ENCODE measurements at regions of chr22 and their contacts with region 1.

Region 1: GRCh38 chr22:28600546-28601143 is 79.0 kb downstream of the TTC28 start:
- DNase-seq: no peak
- ATAC-seq: peak; percentile 59
- H3K4me3 ChIP-seq: no peak overlapping the region
- H3K27ac ChIP-seq: no peak overlapping the region
- H3K4me1 ChIP-seq: no peaks in the 10 kb centered on the region
- H3K27me3 ChIP-seq: no peaks in the 10 kb centered on the region
- CTCF ChIP-seq: peak; percentile 23 to 63 (median 37); a peak in 4 of 6 replicates
- EP300 ChIP-seq: no peak
- POLR2A ChIP-seq: no peak
- RAD21 ChIP-seq: peak; percentile 87

Region 2: GRCh38 chr22:28570691-28571373 is 29.8 kb before region 1 on chr22:
- CTCF ChIA-PET with region 1: no interaction called
- POLR2A ChIA-PET with region 1: no interaction called
- RAD21 ChIA-PET with region 1: no interaction called
- SMC1A ChIA-PET with region 1: no interaction called
- in situ Hi-C with region 1: no loop called
- intact Hi-C with region 1: no loop called
- DNase-seq: no peak
- ATAC-seq: no peak
- H3K4me3 ChIP-seq: no peak overlapping the region
- H3K27ac ChIP-seq: no peak overlapping the region
- H3K4me1 ChIP-seq: no peaks in the 10 kb centered on the region
- H3K27me3 ChIP-seq: no peaks in the 10 kb centered on the region; a peak in 1 of 4 replicates
- CTCF ChIP-seq: no peak
- EP300 ChIP-seq: no peak
- POLR2A ChIP-seq: no peak
- RAD21 ChIP-seq: no peak

Region 3: DNA sequence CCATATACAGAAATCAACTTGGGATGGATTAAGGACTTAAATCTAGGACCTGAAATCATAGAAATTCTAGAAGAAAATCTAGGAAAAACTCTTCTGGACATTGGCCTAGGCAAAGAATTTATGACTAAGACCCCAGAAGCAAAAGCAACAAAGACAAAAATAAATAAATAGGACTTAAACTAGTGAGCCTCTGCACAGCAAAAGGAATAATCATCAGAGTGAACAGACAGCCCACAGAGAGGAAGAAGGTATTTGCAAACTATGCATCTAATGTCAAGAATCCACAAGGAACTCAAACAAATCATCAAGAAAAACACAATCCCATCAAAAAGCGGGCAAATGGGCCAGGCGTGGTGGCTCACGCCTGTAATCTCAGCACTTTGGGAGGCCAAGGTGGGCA is 46.6 kb after region 1 on chr22:
- CTCF ChIA-PET with region 1: no interaction called
- POLR2A ChIA-PET with region 1: no interaction called
- RAD21 ChIA-PET with region 1: no interaction called
- SMC1A ChIA-PET with region 1: no interaction called
- in situ Hi-C with region 1: no loop called
- intact Hi-C with region 1: no loop called
- DNase-seq: no peak
- ATAC-seq: no peak
- H3K4me3 ChIP-seq: no peak overlapping the region
- H3K27ac ChIP-seq: no peak overlapping the region
- H3K4me1 ChIP-seq: no peaks in the 10 kb centered on the region
- H3K27me3 ChIP-seq: no peaks in the 10 kb centered on the region; a peak in 1 of 4 replicates
- CTCF ChIP-seq: no peak
- EP300 ChIP-seq: no peak
- POLR2A ChIP-seq: no peak
- RAD21 ChIP-seq: no peak

Region 4: DNA sequence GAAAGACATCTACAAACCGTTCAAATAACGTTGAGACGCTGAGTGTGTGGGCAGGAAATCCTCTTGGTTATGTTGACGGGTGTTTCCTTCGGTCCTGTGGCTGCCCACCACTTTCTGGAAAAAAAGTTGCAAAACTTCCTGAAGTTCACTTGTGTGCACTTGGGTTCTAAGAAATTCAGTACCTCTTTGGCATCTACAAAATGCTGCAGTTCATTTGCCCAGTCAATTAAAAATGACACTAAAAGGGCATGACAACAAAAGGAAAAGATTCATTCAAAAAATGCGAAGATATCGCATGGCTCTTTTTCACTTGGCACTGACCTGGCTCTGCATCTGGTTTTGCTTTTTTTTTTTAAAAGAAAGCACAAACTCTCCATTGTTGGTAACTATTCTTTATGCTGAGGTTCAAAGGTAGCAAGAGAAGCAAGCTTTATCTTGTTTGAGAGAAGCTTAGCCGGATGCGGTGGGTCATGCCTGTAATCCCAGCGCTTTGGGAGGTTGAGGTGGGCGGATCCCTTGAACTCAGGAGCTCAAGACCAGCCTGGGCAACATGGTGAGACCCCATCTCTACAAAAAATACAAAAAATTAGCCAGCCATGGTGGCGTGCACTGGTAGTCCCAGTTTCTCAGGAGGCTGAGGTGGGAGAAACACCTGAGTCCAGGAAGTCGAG is 210.3 kb after region 1 on chr22:
- CTCF ChIA-PET with region 1: interaction called, 9 read pairs
- POLR2A ChIA-PET with region 1: no interaction called
- RAD21 ChIA-PET with region 1: interaction called, 6 read pairs
- SMC1A ChIA-PET with region 1: interaction called, 10 read pairs
- in situ Hi-C with region 1: no loop called
- intact Hi-C with region 1: no loop called
- DNase-seq: no peak
- ATAC-seq: peak; percentile 34
- H3K4me3 ChIP-seq: no peak overlapping the region
- H3K27ac ChIP-seq: peak overlapping the region; percentile 51; the same call in 1 of the 2 replicates
- H3K4me1 ChIP-seq: peaks cover 21% of the 10 kb centered on the region
- H3K27me3 ChIP-seq: no peaks in the 10 kb centered on the region
- CTCF ChIP-seq: no peak
- EP300 ChIP-seq: no peak
- POLR2A ChIP-seq: no peak
- RAD21 ChIP-seq: no peak

Region 5: GRCh38 chr22:28817919-28818909 is 217.6 kb after region 1 on chr22:
- CTCF ChIA-PET with region 1: interaction called, 10 read pairs
- POLR2A ChIA-PET with region 1: no interaction called
- RAD21 ChIA-PET with region 1: interaction called, 6 read pairs
- SMC1A ChIA-PET with region 1: interaction called, 15 read pairs
- in situ Hi-C with region 1: no loop called
- intact Hi-C with region 1: no loop called
- DNase-seq: no peak
- ATAC-seq: peak; percentile 50
- H3K4me3 ChIP-seq: 0 out of 2 replicates have a peak overlapping the region, but pooled peaks have one; percentile 8
- H3K27ac ChIP-seq: peak overlapping the region; percentile 49
- H3K4me1 ChIP-seq: peaks cover 42% of the 10 kb centered on the region
- H3K27me3 ChIP-seq: no peaks in the 10 kb centered on the region
- CTCF ChIP-seq: no peak
- EP300 ChIP-seq: no peak
- POLR2A ChIP-seq: no peak
- RAD21 ChIP-seq: no peak

Region 6: GRCh38 chr22:28835630-28836189 is 235.1 kb after region 1 on chr22:
- CTCF ChIA-PET with region 1: interaction called, 152 read pairs
- POLR2A ChIA-PET with region 1: no interaction called
- RAD21 ChIA-PET with region 1: interaction called, 67 read pairs
- SMC1A ChIA-PET with region 1: interaction called, 137 read pairs
- in situ Hi-C with region 1: no loop called
- intact Hi-C with region 1: no loop called
- DNase-seq: no peak
- ATAC-seq: no peak
- H3K4me3 ChIP-seq: no peak overlapping the region
- H3K27ac ChIP-seq: no peak overlapping the region
- H3K4me1 ChIP-seq: no peaks in the 10 kb centered on the region
- H3K27me3 ChIP-seq: no peaks in the 10 kb centered on the region
- CTCF ChIP-seq: no peak
- EP300 ChIP-seq: no peak
- POLR2A ChIP-seq: no peak
- RAD21 ChIP-seq: no peak

Measured in GM12878 (cell line).